Activated CD4-positive, alpha-beta T cell treated with anti-CD3 and anti-CD28 coated beads, Interleukin-2, amount 10 ng/mL, durations not matched to agents 24 days and 14 days (primary cell): ENCODE measurements at regions of chr1 and their contacts with region 1.

Region 1: DNA sequence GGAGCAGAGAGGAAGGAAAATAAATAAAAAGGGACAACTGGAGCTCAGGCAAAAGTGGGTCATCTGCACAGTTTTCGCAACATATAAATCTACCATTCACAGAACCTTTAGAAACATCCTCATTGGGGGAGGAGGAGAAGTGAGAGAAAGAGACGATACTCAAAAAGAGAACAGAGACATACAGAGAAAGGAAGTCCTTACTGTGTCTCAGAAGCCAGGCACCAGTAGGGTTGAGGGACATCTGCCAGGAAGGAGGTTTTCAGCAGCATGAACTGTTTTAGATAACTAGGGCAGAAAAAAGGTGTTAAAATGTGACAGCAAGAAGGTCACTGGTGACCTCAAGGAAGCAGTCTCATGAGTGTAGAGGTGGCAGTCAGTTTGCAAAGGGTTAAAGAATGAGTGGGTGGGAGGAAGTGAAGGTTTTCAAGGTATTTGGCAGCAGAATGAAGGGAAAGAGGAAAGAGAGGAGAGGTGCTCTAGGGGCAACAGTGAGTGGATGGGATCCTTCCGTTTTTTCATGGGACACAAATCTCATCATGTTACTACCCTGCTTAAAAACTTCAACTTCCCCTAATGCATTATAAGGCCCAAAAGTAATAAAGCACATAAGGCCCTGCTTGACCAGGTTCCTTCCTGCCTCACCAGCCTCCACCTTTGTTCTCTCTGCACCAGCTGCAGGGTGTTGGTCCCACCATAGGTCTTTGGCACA is 9.5 kb downstream of the JAK1 start:
- DNase-seq: peak; percentile 74
- H3K4me3 Mint-ChIP-seq: no peak overlapping the region
- H3K27ac Mint-ChIP-seq: no peak overlapping the region
- H3K4me1 Mint-ChIP-seq: peaks cover 44% of the 10 kb centered on the region
- H3K27me3 Mint-ChIP-seq: no peaks in the 10 kb centered on the region

Region 2: GRCh38 chr1:64864018-64864940 is 92.6 kb before region 1 on chr1:
- intact Hi-C with region 1: loop called (anchors 5 kb)
- DNase-seq: peak; percentile 77
- H3K4me3 Mint-ChIP-seq: no peak overlapping the region
- H3K27ac Mint-ChIP-seq: peak overlapping the region; percentile 75
- H3K4me1 Mint-ChIP-seq: peaks cover 24% of the 10 kb centered on the region
- H3K27me3 Mint-ChIP-seq: no peaks in the 10 kb centered on the region

Region 3: GRCh38 chr1:64877151-64877550 is 79.7 kb before region 1 on chr1:
- intact Hi-C with region 1: loop called (anchors 5 kb)
- DNase-seq: peak; percentile 85
- H3K4me3 Mint-ChIP-seq: peak overlapping the region; percentile 62
- H3K27ac Mint-ChIP-seq: peak overlapping the region; percentile 45
- H3K4me1 Mint-ChIP-seq: peaks cover 56% of the 10 kb centered on the region
- H3K27me3 Mint-ChIP-seq: no peaks in the 10 kb centered on the region

Region 4: GRCh38 chr1:64887689-64888217 is 69.1 kb before region 1 on chr1:
- intact Hi-C with region 1: loop called (anchors 2 kb)
- DNase-seq: no peak
- H3K4me3 Mint-ChIP-seq: no peak overlapping the region
- H3K27ac Mint-ChIP-seq: no peak overlapping the region
- H3K4me1 Mint-ChIP-seq: peaks cover 65% of the 10 kb centered on the region
- H3K27me3 Mint-ChIP-seq: no peaks in the 10 kb centered on the region

Region 5: DNA sequence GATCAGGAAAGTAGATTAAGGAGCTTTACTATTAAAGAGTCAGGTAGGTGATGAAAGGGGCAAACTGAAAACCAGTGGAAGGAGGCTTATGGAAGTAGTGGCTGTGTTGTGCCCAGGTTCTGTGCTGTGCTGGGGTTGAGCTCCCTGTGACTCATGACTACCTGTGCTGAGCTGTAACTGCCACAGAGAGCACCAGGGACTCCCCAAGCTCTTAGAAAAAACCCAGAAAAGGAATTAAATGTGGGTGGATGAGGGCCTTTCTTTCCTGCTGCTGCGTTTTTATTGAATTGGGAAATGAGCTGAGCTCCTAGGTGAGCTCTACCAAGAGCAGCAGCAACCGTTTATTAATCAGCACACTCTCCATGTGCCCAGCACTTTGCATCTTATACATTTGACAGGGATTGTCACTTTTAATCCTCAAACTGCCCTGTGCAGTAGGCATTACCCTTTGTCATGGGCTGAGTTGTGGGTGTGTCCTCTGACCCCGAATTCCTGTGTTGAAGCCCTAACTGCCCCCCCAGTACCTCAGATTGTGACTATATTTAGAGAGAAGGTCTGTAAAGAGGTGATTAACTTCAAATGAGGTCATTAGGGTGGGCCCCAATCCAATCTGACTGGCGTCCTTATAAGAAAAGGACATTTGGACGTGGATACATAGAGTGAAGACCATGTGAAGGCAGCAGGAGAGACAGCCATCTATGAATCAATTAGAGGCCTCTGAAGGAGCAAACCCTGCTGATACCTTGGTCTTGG is 256.6 kb after region 1 on chr1:
- intact Hi-C with region 1: loop called (anchors 5 kb)
- DNase-seq: peak; percentile 63
- H3K4me3 Mint-ChIP-seq: peak overlapping the region; percentile 72
- H3K27ac Mint-ChIP-seq: peak overlapping the region; percentile 93
- H3K4me1 Mint-ChIP-seq: peaks cover 69% of the 10 kb centered on the region
- H3K27me3 Mint-ChIP-seq: no peaks in the 10 kb centered on the region

Region 6: GRCh38 chr1:66271216-66271903 is 1314.5 kb after region 1 on chr1:
- intact Hi-C with region 1: loop called (anchors 5 kb)
- DNase-seq: peak; percentile 81
- H3K4me3 Mint-ChIP-seq: peak overlapping the region; percentile 67
- H3K27ac Mint-ChIP-seq: peak overlapping the region; percentile 88
- H3K4me1 Mint-ChIP-seq: peaks cover 62% of the 10 kb centered on the region
- H3K27me3 Mint-ChIP-seq: no peaks in the 10 kb centered on the region

Region 7: GRCh38 chr1:66929999-66930822 is 1973.3 kb after region 1 on chr1:
- intact Hi-C with region 1: loop called (anchors 5 kb)
- DNase-seq: peak; percentile 99
- H3K4me3 Mint-ChIP-seq: peak overlapping the region; percentile 96
- H3K27ac Mint-ChIP-seq: peak overlapping the region; percentile 99
- H3K4me1 Mint-ChIP-seq: peaks cover 50% of the 10 kb centered on the region
- H3K27me3 Mint-ChIP-seq: no peaks in the 10 kb centered on the region